ENCODE measurements at regions of chr3 and their contacts with region 1.

Region 1: GRCh38 chr3:57169872-57170623 is 4.9 kb upstream of the IL17RD start:
- DNase-seq: peak; percentile 65 to 92
- H3K4me3 ChIP-seq: peak overlapping the region; percentile 33 to 64 (median 54); a peak in 6 of 8 replicates
- H3K27ac ChIP-seq: no peak overlapping the region
- H3K4me1 ChIP-seq: peaks cover 3 to 9% (median 5%) of the 10 kb centered on the region in 4 experiments
- H3K27me3 ChIP-seq: peaks cover 0 to 5% (median 0%) of the 10 kb centered on the region in 4 experiments; a peak in 3 of 7 replicates
- CTCF ChIP-seq: peak; percentile 76 to 81 (median 79)
- EP300 ChIP-seq: no peak
- POLR2A ChIP-seq: no peak
- RAD21 ChIP-seq: peak; percentile 91 to 93

Region 2: DNA sequence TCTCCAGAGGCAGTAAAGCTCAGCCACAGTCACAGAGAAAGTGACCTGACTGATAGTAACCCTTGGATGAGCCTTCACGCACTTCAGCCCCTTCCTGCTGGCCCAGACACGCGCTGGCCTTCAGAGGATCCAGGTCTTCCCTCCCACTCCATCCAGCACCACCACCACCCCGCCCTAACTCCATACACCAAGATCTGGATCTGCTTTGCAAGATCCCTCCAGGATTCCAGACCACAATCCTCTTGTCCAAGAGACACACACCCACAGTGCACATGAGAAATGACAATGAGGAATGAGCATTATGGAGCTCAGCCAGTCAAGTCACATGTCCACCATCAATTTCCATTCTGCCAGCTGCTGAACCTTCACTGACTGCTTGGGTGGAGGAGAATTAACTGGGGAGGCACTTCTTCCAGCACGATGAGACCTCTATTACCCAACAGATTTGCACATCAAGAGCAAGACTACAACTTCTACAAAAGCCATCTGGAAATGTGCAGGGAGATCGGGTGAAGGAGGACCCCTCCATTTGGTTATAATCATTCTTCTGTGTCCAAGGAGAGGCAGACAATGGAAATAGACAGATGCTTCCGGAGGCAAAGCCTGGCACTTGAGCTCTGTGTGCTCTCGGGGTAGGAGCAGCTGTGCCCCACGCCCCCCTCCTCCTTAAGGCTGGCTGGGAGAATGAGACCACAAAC is 121.9 kb before region 1 on chr3:
- CTCF ChIA-PET with region 1: no interaction called
- POLR2A ChIA-PET with region 1: no interaction called
- DNase-seq: no peak
- H3K4me3 ChIP-seq: no peak overlapping the region
- H3K27ac ChIP-seq: no peak overlapping the region
- H3K4me1 ChIP-seq: peaks cover 0 to 5% (median 2%) of the 10 kb centered on the region in 4 experiments; a peak in 4 of 7 replicates
- H3K27me3 ChIP-seq: no peaks in the 10 kb centered on the region; a peak in 1 of 7 replicates
- CTCF ChIP-seq: no peak
- EP300 ChIP-seq: no peak
- POLR2A ChIP-seq: no peak
- RAD21 ChIP-seq: no peak

Region 3: DNA sequence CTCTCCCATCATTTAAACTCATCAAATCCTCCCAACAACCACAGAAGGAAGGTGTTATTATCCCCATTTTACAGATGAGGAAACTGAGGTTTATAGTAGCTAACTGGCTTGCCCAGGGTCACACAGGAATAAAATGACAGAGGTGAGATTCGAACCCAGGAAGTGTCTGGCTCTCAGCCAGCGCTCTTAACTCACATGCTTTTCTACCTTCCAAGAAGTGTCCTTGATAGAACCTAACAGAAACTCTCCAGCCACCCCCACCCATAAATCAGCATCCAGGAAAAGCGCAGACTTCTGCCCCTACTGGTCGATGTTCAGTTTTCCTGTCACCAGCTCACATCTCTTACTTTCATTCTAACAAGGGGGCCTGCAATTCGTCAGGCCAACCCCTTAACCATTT is 57.8 kb before region 1 on chr3:
- CTCF ChIA-PET with region 1: interaction called, 11 read pairs
- POLR2A ChIA-PET with region 1: interaction called, 3 read pairs
- DNase-seq: no peak
- H3K4me3 ChIP-seq: no peak overlapping the region
- H3K27ac ChIP-seq: no peak overlapping the region
- H3K4me1 ChIP-seq: peaks cover 0 to 12% (median 8%) of the 10 kb centered on the region in 4 experiments; a peak in 4 of 7 replicates
- H3K27me3 ChIP-seq: no peaks in the 10 kb centered on the region
- CTCF ChIP-seq: peak; percentile 30 to 53 (median 34); a peak in 3 of 4 replicates
- EP300 ChIP-seq: no peak
- POLR2A ChIP-seq: no peak
- RAD21 ChIP-seq: peak in 1 of 2 experiments; percentile 34; a peak in 1 of 4 replicates

Region 4: GRCh38 chr3:57158813-57159738 is 11.0 kb before region 1 on chr3:
- CTCF ChIA-PET with region 1: interaction called, 22 read pairs
- POLR2A ChIA-PET with region 1: no interaction called
- DNase-seq: peak in 1 of 2 experiments; percentile 51
- H3K4me3 ChIP-seq: peak overlapping the region in 1 of 4 experiments; percentile 19; a peak in 1 of 8 replicates
- H3K27ac ChIP-seq: no peak overlapping the region
- H3K4me1 ChIP-seq: peaks cover 13 to 51% (median 28%) of the 10 kb centered on the region in 4 experiments
- H3K27me3 ChIP-seq: peaks cover 6 to 47% (median 23%) of the 10 kb centered on the region in 4 experiments
- CTCF ChIP-seq: peak in 1 of 3 experiments; percentile 2; a peak in 1 of 4 replicates
- EP300 ChIP-seq: no peak
- POLR2A ChIP-seq: no peak
- RAD21 ChIP-seq: 0 out of 4 replicates have a peak, but pooled peaks of 1 of the 2 experiments have one; percentile 10

Region 5: DNA sequence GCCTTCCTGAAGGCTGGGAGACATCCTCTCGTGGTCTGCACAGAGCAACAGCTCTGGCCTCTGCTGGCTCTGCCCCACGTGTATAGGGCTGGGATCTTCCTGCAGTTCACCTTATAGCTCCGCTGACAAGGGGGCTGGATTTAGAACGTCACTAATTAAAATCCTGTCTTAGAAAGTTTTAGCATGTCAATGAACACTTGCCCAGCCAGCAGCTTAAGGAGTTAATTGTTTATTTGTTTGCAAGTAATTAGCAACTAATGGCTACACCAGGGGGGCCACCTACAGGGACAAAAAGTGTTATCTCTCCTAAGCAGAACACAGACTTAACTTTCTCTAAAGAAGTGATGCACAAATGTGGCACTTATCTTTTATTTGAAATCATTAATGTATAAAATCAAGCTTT is 29.8 kb after region 1 on chr3 and contains the start of gene HESX1:
- CTCF ChIA-PET with region 1: interaction called, 22 read pairs
- POLR2A ChIA-PET with region 1: interaction called, 6 read pairs
- DNase-seq: peak; percentile 68 to 75
- H3K4me3 ChIP-seq: peak within 1 kb of the TSS; percentile 49 to 73 (median 60)
- H3K27ac ChIP-seq: no peak within 1 kb of the TSS
- H3K4me1 ChIP-seq: peaks cover 1 to 10% (median 4%) of the 10 kb centered on the region in 4 experiments; a peak in 5 of 7 replicates
- H3K27me3 ChIP-seq: no peaks in the 10 kb centered on the region; a peak in 1 of 7 replicates
- CTCF ChIP-seq: no peak
- EP300 ChIP-seq: peak in 1 of 2 experiments; percentile 87; a peak in 1 of 3 replicates
- POLR2A ChIP-seq: peak; percentile 79 to 94
- RAD21 ChIP-seq: no peak
- total RNA-seq, gene HESX1: 9.0 and 12.0 TPM in 2 replicates

Region 6: DNA sequence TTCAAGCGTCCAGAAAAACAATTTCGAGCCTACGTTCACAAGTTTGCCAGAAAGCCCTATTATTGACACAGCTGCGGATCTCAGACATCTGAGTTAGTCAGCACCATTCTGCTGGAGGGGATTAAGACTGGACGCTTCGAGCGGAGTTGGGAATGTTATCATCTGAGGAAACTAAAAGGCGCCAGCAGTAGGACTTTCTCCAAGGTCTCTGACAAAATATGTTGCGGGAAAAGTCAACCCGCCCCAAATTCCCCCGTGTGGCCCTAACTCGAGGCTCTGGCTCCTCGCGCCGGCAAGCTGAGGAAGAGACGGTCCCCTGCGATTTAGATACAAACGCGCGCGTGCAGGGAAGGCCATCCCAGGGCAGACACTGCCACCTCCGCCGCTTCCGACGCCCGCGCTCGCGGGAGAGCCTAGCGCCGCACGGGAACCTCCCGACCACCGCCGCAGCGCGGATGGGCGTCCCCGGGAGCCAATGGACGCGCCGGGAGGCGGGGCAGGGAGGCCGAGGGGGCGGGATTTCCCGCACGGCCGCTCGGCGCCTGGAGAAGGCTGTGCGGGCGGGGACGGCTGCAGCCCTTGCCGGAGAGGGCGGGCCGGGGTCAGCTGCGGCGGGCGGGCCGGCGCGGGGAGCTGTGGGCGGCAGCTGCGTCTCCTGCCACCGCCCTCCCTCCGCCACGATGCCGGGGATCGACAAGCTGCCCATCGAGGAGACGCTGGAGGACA is 57.3 kb after region 1 on chr3 and contains the start of gene APPL1:
- CTCF ChIA-PET with region 1: interaction called, 61 read pairs
- POLR2A ChIA-PET with region 1: interaction called, 3 read pairs
- DNase-seq: peak; percentile 64 to 98
- H3K4me3 ChIP-seq: peak within 1 kb of the TSS; percentile 70 to 91 (median 82)
- H3K27ac ChIP-seq: 0 out of 2 replicates have a peak within 1 kb of the TSS, but pooled peaks have one; percentile 3
- H3K4me1 ChIP-seq: peaks cover 0 to 3% (median 1%) of the 10 kb centered on the region in 4 experiments; a peak in 2 of 7 replicates
- H3K27me3 ChIP-seq: peaks cover 0 to 2% (median 0%) of the 10 kb centered on the region in 4 experiments; a peak in 1 of 7 replicates
- CTCF ChIP-seq: no peak
- EP300 ChIP-seq: no peak
- POLR2A ChIP-seq: peak; percentile 88 to 90
- RAD21 ChIP-seq: no peak; a peak in 1 of 4 replicates
- total RNA-seq, gene APPL1: 30.7 and 34.4 TPM in 2 replicates

Region 7: GRCh38 chr3:57646723-57647122 is 476.7 kb after region 1 on chr3:
- CTCF ChIA-PET with region 1: no interaction called
- POLR2A ChIA-PET with region 1: no interaction called
- DNase-seq: no peak
- H3K4me3 ChIP-seq: no peak overlapping the region
- H3K27ac ChIP-seq: no peak overlapping the region
- H3K4me1 ChIP-seq: no peaks in the 10 kb centered on the region
- H3K27me3 ChIP-seq: no peaks in the 10 kb centered on the region
- CTCF ChIP-seq: no peak
- EP300 ChIP-seq: no peak
- POLR2A ChIP-seq: no peak
- RAD21 ChIP-seq: peak; percentile 22 to 40; a peak in 3 of 4 replicates